ENCODE measurements at regions of chr6 and their contacts with region 1.

Region 1: DNA sequence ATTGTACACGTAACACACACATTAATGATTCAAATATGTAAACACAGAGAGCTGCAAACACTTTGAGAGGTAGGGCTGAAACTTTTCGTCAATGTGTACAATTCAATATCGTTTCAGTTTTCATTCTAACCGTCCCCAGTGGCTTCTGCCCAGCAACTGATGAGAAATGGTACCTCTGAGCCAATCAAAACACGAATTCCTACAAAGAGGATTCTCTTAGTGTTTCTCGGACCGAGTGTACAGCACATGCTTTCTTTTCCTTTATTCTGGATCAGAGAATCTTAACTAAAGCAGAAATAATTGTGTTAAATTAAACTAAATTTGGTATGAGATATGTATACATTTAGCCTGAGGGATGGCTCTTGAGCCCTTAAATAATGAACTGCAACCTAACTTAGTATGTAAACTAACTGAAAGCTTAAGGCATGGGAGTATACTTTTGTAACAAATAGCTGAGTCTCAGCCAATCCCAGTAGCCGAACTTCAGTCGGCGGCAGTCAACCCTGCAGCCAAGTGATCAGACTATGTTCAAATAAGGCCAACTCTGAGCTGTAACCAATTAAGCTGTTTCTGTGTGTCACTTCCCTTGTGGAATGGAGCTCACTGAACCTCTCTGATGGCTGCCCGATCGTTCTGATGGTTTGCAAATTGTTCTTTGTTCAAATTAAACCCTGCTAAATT is 16.1 kb downstream of the BTN2A1 start:
- DNase-seq: peak; percentile 90
- H3K4me3 Mint-ChIP-seq: peak overlapping the region; percentile 98
- H3K27ac Mint-ChIP-seq: peak overlapping the region; percentile 100
- H3K4me1 Mint-ChIP-seq: peaks cover 40% of the 10 kb centered on the region
- H3K27me3 Mint-ChIP-seq: no peaks in the 10 kb centered on the region

Region 2: DNA sequence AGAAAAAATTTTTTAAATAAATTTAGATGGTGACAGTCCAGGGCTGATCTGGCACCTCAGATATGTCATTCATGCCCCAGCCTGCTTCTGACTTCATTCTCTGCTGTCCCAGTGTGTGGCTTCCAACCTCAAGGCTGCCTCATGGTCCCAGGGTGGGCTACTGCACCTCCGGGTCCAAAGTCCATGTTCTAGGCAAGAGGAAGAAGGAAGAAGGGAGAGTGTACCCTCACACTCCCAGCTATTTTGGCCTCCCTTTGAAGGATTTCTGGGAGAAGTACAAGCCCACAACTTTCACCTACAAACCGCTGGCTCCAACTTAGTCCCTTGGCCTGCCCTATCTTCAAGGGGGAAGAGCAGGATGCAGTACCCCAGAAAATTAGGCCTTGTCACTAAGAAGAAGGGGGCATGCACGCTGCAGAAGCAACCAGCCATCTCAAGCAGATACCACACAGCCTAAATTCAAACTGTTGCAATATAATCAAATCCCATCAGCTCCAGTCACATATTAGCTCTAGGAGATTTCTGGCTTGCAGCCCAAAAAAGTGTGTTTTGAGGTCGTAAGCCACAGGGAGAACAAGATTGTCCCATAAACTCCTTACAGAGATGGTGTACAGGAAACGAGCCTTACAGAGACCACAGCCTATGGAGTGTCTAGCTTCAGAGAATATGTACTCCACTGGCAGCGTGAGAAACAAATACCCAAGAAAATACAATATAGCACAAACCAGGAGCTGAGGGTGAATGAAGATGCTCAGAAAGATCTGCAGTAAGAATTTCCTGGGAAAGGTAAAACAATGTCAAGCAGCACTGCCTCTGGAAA is 109.8 kb before region 1 on chr6:
- CTCF ChIA-PET with region 1: no interaction called
- intact Hi-C with region 1: loop called (anchors 1 kb)
- DNase-seq: peak; percentile 34
- H3K4me3 Mint-ChIP-seq: no peak overlapping the region
- H3K27ac Mint-ChIP-seq: no peak overlapping the region
- H3K4me1 Mint-ChIP-seq: peaks cover 51% of the 10 kb centered on the region
- H3K27me3 Mint-ChIP-seq: no peaks in the 10 kb centered on the region

Region 3: GRCh38 chr6:26375270-26375669 is 98.6 kb before region 1 on chr6:
- CTCF ChIA-PET with region 1: no interaction called
- intact Hi-C with region 1: no loop called
- DNase-seq: no peak
- H3K4me3 Mint-ChIP-seq: no peak overlapping the region
- H3K27ac Mint-ChIP-seq: peak overlapping the region; percentile 59
- H3K4me1 Mint-ChIP-seq: peaks cover 37% of the 10 kb centered on the region
- H3K27me3 Mint-ChIP-seq: no peaks in the 10 kb centered on the region

Region 4: GRCh38 chr6:26439657-26440056 is 34.2 kb before region 1 on chr6:
- CTCF ChIA-PET with region 1: interaction called, 4 read pairs
- intact Hi-C with region 1: loop called (anchors 1 kb)
- DNase-seq: no peak
- H3K4me3 Mint-ChIP-seq: peak overlapping the region; percentile 96
- H3K27ac Mint-ChIP-seq: peak overlapping the region; percentile 95
- H3K4me1 Mint-ChIP-seq: peaks cover 35% of the 10 kb centered on the region
- H3K27me3 Mint-ChIP-seq: no peaks in the 10 kb centered on the region

Region 5: DNA sequence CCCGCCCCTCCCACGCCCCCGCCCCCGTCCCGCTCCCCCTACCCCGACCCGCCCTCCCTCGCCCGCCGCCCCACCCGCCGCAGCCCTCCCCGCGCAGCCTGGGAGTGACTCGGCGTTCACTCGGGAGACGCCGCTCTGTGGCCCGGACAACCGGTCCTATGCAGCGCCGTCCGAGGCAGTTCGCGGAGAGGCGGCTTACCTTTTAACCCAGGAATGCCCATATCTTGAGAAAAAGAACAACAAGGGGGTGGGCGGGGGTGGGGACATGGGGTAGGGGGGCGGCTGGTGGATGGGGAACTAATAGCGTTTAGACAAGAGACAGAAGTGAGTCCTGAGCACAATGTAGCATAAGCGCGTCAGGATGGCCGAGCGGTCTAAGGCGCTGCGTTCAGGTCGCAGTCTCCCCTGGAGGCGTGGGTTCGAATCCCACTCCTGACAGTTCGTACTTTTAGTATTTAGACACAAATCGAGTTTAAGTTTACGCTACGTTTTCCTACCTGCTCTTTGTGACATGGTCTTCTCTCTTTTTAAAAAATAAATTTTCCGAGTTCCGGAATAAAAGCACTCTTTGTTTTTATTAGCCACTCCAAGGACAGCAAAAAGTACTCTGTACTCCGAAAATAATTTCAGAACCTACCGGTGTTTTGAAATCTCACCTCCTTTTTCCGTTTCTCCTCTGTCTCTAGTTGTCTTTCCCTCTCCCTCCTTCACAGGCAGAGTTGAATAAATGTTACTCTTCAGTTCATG is 47.1 kb after region 1 on chr6:
- CTCF ChIA-PET with region 1: no interaction called
- intact Hi-C with region 1: loop called (anchors 1 kb)
- DNase-seq: peak; percentile 90
- H3K4me3 Mint-ChIP-seq: peak overlapping the region; percentile 76
- H3K27ac Mint-ChIP-seq: peak overlapping the region; percentile 94
- H3K4me1 Mint-ChIP-seq: peaks cover 27% of the 10 kb centered on the region
- H3K27me3 Mint-ChIP-seq: peaks cover 2% of the 10 kb centered on the region

Region 6: DNA sequence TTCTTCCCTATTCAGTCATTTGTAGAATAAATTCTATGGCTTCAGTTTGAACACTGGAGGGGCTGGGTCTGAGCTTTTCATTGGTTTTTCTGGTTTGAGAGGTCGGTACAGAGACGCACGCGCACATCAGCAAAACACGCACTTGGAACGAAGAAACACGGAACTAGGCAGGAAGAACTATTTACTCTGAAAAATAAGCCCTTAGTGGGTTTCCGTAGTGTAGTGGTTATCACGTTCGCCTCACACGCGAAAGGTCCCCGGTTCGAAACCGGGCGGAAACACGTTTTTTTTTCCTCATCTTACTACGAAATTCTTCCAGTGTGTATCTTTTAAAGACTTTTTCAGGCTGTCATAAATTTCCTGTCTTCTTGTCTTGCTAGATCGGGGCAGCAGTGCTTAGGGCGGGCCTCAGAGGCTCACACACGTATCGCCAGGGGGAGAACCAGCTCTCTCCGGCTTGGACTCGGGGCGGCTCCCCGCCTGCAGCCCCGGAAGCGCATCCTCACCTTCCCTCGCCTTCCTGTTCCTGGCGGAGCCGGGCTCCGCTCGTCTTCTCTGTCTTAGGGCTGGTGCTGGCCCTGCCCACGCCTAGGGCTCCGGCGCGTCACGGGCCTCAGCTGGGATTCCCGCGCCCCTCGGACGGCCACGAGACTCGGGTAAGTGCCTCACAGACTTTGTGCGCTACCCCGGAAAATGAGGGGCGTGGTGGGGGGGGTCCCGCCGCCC is 64.1 kb after region 1 on chr6 and contains the start of gene HMGN4:
- CTCF ChIA-PET with region 1: interaction called, 3 read pairs
- intact Hi-C with region 1: loop called (anchors 1 kb)
- DNase-seq: peak; percentile 82
- H3K4me3 Mint-ChIP-seq: peak within 1 kb of the TSS; percentile 87
- H3K27ac Mint-ChIP-seq: peak within 1 kb of the TSS; percentile 98
- H3K4me1 Mint-ChIP-seq: peaks cover 56% of the 10 kb centered on the region
- H3K27me3 Mint-ChIP-seq: no peaks in the 10 kb centered on the region
- total RNA-seq, gene HMGN4: 70.4 to 73.2 TPM

Region 7: GRCh38 chr6:27081931-27082330 is 608.0 kb after region 1 on chr6:
- CTCF ChIA-PET with region 1: no interaction called
- intact Hi-C with region 1: no loop called
- DNase-seq: no peak
- H3K4me3 Mint-ChIP-seq: no peak overlapping the region
- H3K27ac Mint-ChIP-seq: no peak overlapping the region
- H3K4me1 Mint-ChIP-seq: peaks cover 2% of the 10 kb centered on the region
- H3K27me3 Mint-ChIP-seq: peaks cover 25% of the 10 kb centered on the region

Region 8: DNA sequence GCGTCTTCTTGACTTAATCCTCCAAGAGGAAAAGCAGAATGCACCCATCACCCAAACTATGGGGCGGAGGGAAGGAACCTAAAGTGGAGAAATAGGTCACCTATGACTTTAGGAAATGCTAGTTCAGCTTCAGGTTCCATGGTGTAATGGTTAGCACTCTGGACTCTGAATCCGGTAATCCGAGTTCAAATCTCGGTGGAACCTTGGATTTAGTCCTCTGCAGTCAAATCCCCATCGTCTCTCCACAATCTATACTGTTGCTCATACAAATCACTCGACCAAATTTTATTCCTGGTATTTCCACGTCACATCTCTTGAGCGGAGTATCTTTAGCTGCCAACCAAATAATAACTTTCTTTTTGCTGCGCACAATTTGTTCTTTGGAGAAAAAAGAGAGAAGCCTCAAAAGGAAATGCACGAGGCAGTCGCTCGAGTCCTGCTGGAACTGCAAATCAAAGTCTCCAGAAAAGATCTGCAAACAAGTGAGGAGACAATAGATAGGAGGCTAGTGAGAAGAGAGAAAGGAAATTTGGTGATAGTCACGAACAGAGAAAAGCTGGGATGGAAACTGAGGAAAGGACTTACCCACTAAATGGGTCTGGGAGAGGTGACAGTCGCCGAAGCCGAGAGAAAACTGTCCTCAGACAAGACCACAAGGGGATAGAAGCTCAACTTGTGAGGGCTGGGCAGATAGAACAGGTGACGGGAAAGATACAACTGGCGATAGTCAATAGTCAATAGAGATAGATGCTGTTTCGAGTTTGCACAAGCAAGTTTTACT is 821.6 kb after region 1 on chr6:
- CTCF ChIA-PET with region 1: no interaction called
- intact Hi-C with region 1: no loop called
- DNase-seq: no peak
- H3K4me3 Mint-ChIP-seq: no peak overlapping the region
- H3K27ac Mint-ChIP-seq: no peak overlapping the region
- H3K4me1 Mint-ChIP-seq: peaks cover 3% of the 10 kb centered on the region
- H3K27me3 Mint-ChIP-seq: peaks cover 79% of the 10 kb centered on the region